ENCODE measurements at regions of chr7 and their contacts with region 1.

Region 1: DNA sequence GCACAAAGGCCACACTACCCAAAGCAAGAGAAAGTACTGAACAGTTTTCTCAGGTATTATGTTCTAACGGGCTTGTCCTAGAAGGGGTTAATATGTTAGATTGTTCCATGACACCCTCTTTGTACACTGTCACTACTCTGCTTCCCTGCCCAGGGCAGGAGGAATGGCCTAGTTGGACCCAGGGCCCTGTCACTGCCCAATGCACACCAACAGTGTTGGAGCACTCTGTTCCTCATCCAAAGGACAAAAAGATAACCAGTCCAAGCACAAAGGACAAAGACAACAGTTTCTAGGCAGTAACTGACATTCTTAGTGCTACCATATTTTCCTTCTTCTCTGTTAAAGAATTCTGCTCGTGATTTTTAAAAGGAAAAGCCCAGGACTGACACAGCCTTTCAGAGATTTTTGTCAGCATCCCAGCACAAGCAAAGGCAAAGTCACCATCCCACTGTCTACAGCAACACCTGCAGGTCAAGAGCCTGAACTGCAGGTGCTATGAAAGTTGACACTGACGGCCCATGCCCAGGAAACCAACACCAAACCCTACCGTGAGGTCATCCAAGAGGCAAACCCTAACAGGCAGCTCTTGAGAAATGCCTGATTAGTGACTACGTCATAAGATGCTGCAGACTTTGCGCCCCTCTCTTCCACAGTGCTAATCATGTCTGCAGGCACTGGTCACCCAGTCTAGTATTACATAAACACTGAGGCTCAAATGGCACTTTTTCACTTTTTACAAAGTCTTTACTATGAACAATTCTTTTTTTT is 13.2 kb downstream of the NUDCD3 start:
- DNase-seq: peak; percentile 70
- H3K4me3 Mint-ChIP-seq: no peak overlapping the region
- H3K27ac Mint-ChIP-seq: no peak overlapping the region
- H3K4me1 Mint-ChIP-seq: peaks cover 33% of the 10 kb centered on the region
- H3K27me3 Mint-ChIP-seq: no peaks in the 10 kb centered on the region

Region 2: DNA sequence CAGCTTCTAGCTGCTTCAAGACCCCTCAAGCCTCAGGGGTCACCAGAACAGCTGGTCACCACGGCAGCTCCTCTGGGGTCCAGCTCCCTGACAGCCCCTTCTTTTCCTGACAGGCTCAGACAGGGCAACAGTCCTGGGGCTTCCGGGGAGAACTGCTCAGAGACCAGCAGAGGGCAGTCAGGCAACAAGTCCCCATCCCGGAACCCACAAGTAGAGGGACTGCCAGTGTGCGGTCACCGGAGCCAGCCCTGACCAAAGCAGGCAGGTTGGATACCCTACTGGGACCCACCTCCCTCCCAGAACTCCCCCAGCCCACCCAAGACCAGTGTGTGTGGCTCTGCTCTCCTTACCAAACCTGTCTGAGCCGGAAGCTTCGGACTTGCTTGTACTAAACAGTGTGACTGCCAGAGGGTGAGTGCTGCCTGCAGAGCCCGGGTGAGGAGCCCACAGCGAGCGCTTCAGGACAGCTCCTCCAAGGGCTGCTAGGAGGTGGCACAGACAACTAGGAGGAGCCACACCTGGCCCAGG is 236.2 kb before region 1 on chr7:
- CTCF ChIA-PET with region 1: interaction called, 8 read pairs
- intact Hi-C with region 1: loop called (anchors 1 kb)
- DNase-seq: peak; percentile 82
- H3K4me3 Mint-ChIP-seq: no peak overlapping the region
- H3K27ac Mint-ChIP-seq: peak overlapping the region; percentile 30
- H3K4me1 Mint-ChIP-seq: no peaks in the 10 kb centered on the region
- H3K27me3 Mint-ChIP-seq: no peaks in the 10 kb centered on the region

Region 3: DNA sequence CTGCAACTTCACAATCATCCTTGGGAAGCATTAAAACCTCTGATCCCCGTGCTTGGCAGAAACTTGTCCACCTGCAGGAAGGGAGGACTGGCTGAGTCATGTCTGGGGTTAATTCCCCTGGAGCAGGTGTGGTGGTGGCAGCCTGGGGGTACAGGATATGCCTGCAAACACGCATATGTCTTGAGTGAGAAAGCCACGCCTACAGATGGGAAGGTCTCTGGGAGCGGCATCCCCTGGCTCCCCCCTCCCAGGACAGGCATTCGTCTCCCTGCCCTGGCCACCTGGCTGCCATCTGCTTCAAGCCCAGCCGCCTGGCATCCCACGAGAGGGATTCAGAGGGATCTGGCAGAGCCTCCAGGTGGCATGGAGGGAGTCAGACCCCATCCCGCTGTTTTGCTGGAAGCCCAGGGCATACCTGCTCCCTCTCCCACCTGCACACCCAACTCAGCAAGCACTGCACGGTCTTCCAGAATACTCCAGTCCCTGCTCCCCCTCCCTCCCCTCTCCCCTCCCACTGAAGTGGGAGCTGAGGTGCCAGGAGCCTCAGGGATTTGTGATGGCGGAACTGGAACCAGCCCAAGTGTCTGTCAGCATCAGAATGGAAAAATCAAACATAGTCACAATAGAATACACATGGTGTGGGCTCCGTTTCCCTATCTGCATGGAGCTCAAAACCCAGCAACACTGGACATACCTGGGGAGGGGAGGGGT is 212.9 kb before region 1 on chr7:
- CTCF ChIA-PET with region 1: no interaction called
- intact Hi-C with region 1: no loop called
- DNase-seq: peak; percentile 52
- H3K4me3 Mint-ChIP-seq: no peak overlapping the region
- H3K27ac Mint-ChIP-seq: no peak overlapping the region
- H3K4me1 Mint-ChIP-seq: peaks cover 10% of the 10 kb centered on the region
- H3K27me3 Mint-ChIP-seq: no peaks in the 10 kb centered on the region

Region 4: GRCh38 chr7:44307301-44307900 is 169.8 kb before region 1 on chr7:
- CTCF ChIA-PET with region 1: no interaction called
- intact Hi-C with region 1: loop called (anchors 1 kb)
- DNase-seq: peak; percentile 63
- H3K4me3 Mint-ChIP-seq: no peak overlapping the region
- H3K27ac Mint-ChIP-seq: no peak overlapping the region
- H3K4me1 Mint-ChIP-seq: peaks cover 3% of the 10 kb centered on the region
- H3K27me3 Mint-ChIP-seq: peaks cover 8% of the 10 kb centered on the region

Region 5: DNA sequence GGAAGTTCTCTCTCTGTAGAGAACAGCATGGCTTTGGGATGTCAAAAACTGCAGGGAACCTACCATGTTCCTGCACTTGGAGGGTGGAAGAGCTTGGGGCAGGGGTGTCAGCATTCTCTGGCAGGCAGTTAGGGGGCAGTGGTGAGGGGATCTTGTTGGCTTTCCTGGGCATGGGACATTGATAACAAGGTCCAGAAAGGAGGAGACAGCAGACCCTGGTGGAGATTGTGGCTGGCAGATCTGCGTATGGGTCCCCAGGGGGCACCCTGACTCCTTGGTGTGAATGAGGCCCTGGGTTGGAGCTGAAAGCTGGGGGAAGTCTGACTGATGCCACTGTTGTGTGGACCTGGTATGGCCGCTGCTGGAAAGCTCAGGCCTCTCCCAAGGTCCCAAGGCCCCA is 128.9 kb before region 1 on chr7:
- CTCF ChIA-PET with region 1: interaction called, 3 read pairs
- intact Hi-C with region 1: loop called (anchors 1 kb)
- DNase-seq: peak; percentile 43
- H3K4me3 Mint-ChIP-seq: no peak overlapping the region
- H3K27ac Mint-ChIP-seq: no peak overlapping the region
- H3K4me1 Mint-ChIP-seq: no peaks in the 10 kb centered on the region
- H3K27me3 Mint-ChIP-seq: peaks cover 8% of the 10 kb centered on the region

Region 6: DNA sequence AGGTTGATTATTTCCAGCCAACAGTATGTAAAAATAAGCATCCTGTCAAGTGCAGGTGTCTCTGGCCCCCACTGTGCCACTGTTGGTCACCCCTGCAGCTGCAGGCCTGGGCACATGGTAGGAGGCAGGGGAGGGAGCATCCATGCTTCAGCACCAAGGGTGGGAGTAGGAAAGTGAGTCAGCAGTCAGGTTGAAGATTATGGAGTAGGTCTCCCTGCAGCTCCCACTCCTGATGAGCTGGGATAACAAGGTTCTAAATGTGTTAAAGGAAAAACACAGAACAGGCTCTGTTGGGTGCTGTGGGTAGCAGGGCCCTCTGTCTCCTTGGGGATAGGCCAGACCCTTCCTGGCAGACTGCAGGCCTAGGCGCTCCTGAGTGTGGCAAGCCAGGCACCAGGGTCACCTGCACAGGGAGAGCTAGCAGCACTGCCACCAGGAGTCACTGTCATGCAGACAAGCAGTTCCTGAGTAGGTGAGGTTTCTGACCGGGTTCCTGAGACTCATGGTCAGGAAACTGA is 46.1 kb before region 1 on chr7:
- CTCF ChIA-PET with region 1: interaction called, 3 read pairs
- intact Hi-C with region 1: loop called (anchors 1 kb)
- DNase-seq: peak; percentile 19
- H3K4me3 Mint-ChIP-seq: no peak overlapping the region
- H3K27ac Mint-ChIP-seq: no peak overlapping the region
- H3K4me1 Mint-ChIP-seq: peaks cover 38% of the 10 kb centered on the region
- H3K27me3 Mint-ChIP-seq: no peaks in the 10 kb centered on the region

Region 7: DNA sequence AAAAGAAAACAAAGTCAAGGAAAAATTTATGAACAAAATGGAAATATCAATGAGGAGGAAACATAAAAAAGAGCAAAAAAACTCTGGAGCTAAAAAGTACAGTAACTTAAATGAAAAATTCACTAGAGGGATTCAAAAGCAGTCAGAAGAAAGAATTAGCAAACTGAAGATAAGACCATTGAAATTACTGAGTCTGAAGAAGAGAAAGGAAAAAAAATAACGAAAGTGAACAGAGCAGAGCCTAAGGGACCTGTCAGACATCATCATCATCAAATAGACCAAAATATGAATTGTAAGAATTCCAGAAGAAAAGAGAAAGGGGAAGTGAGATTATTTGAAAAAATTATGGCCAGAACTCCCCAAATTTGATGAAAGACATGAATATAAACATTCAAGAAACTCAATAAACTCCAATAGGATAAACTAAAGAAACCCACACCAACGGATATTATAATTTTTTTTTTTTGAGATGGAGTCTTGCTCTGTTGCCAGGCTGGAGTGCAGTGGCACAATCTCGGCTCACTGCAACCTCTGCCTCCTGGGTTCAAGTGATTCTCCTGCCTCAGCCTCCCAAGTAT is 47.7 kb after region 1 on chr7:
- CTCF ChIA-PET with region 1: no interaction called
- intact Hi-C with region 1: no loop called
- DNase-seq: no peak
- H3K4me3 Mint-ChIP-seq: no peak overlapping the region
- H3K27ac Mint-ChIP-seq: no peak overlapping the region
- H3K4me1 Mint-ChIP-seq: no peaks in the 10 kb centered on the region
- H3K27me3 Mint-ChIP-seq: no peaks in the 10 kb centered on the region

Measured in activated naive CD4-positive, alpha-beta T cell treated with anti-CD3 and anti-CD28 coated beads for 36 hours (primary cell).